ENCODE measurements at regions of chr5 and their contacts with region 1.

Region 1: DNA sequence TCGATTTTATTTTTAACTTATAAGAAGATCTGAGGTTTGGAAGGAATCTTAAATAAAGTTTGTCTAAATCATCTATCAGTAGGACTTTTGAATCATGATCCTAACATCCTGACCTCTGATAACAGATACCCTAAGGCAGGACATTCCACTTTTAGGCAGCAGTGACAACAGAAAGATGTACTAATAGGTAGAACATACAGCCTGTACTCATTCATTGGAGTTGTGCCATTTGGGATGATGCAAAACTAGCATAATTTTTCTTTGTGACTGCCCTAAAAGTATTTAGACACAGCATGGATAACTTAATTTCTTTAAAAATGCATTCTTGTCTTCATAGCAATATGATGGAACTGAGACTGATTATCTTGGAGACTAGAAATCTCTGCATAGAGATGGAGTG is 39.7 kb downstream of the CDC42SE2 start:
- DNase-seq: no peak
- ATAC-seq: no peak
- H3K4me3 ChIP-seq: no peak overlapping the region
- H3K4me3 Mint-ChIP-seq: peak overlapping the region in 5 of 10 donors; percentile 0 to 46 (median 28)
- H3K27ac ChIP-seq: peak overlapping the region; percentile 23
- H3K27ac Mint-ChIP-seq: peak overlapping the region in 6 of 9 donors; percentile 2 to 62 (median 36)
- H3K4me1 ChIP-seq: peaks cover 45 to 55% of the 10 kb centered on the region in 2 donors
- H3K4me1 Mint-ChIP-seq: peaks cover 53 to 77% (median 71%) of the 10 kb centered on the region in 7 donors
- H3K27me3 ChIP-seq: no peaks in the 10 kb centered on the region
- H3K27me3 Mint-ChIP-seq: no peaks in the 10 kb centered on the region

Region 2: GRCh38 chr5:130198925-130199324 is 1104.6 kb before region 1 on chr5:
- CTCF ChIA-PET with region 1: no interaction called
- POLR2A ChIA-PET with region 1: no interaction called
- intact Hi-C with region 1: no loop called
- DNase-seq: peak in 1 of 9 donors; percentile 1
- ATAC-seq: no peak
- H3K4me3 ChIP-seq: no peak overlapping the region
- H3K4me3 Mint-ChIP-seq: no peak overlapping the region
- H3K27ac ChIP-seq: no peak overlapping the region
- H3K27ac Mint-ChIP-seq: no peak overlapping the region
- H3K4me1 ChIP-seq: no peaks in the 10 kb centered on the region
- H3K4me1 Mint-ChIP-seq: no peaks in the 10 kb centered on the region
- H3K27me3 ChIP-seq: peaks cover 0 to 3% of the 10 kb centered on the region in 2 donors
- H3K27me3 Mint-ChIP-seq: peaks cover 0 to 32% (median 20%) of the 10 kb centered on the region in 5 donors

Region 3: GRCh38 chr5:131328536-131329285 is 25.2 kb after region 1 on chr5:
- CTCF ChIA-PET with region 1: no interaction called
- POLR2A ChIA-PET with region 1: no interaction called
- intact Hi-C with region 1: loop called in 1 of 2 experiments (anchors 2 kb)
- DNase-seq: peak in 1 of 9 donors; percentile 11
- ATAC-seq: peak; percentile 18
- H3K4me3 ChIP-seq: no peak overlapping the region
- H3K4me3 Mint-ChIP-seq: peak overlapping the region in 9 of 10 donors; percentile 1 to 76 (median 42)
- H3K27ac ChIP-seq: peak overlapping the region; percentile 9
- H3K27ac Mint-ChIP-seq: peak overlapping the region; percentile 44 to 85 (median 73)
- H3K4me1 ChIP-seq: peaks cover 38 to 49% of the 10 kb centered on the region in 2 donors
- H3K4me1 Mint-ChIP-seq: peaks cover 48 to 92% (median 66%) of the 10 kb centered on the region in 7 donors
- H3K27me3 ChIP-seq: no peaks in the 10 kb centered on the region
- H3K27me3 Mint-ChIP-seq: no peaks in the 10 kb centered on the region

Region 4: DNA sequence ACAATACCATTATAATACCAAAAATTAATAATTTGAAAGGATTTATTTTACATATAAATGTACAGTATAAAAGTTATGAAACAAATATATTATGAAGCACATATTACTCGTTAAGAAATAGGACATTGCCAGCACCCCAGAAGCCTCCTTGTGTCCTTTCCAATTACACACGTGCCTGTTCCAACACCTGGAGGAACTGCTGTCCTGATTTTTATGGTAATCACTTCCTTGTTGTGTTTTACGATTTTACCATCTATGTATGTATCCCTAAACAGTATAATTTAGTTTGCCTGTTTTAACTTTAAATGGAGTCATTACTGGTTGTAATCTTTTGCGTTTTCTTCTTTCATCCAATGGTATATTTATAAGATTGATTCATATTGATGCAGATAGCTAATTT is 65.3 kb after region 1 on chr5:
- CTCF ChIA-PET with region 1: no interaction called
- POLR2A ChIA-PET with region 1: no interaction called
- intact Hi-C with region 1: no loop called
- DNase-seq: no peak
- ATAC-seq: no peak
- H3K4me3 ChIP-seq: no peak overlapping the region
- H3K4me3 Mint-ChIP-seq: peak overlapping the region in 4 of 10 donors; percentile 28 to 75 (median 46)
- H3K27ac ChIP-seq: no peak overlapping the region
- H3K27ac Mint-ChIP-seq: peak overlapping the region in 8 of 9 donors; percentile 47 to 99 (median 86)
- H3K4me1 ChIP-seq: peaks cover 62 to 79% of the 10 kb centered on the region in 2 donors
- H3K4me1 Mint-ChIP-seq: peaks cover 53 to 98% (median 88%) of the 10 kb centered on the region in 7 donors
- H3K27me3 ChIP-seq: no peaks in the 10 kb centered on the region
- H3K27me3 Mint-ChIP-seq: no peaks in the 10 kb centered on the region